AG04450 (cell line): ENCODE measurements at regions of chr11 and their contacts with region 1.

Region 1: DNA sequence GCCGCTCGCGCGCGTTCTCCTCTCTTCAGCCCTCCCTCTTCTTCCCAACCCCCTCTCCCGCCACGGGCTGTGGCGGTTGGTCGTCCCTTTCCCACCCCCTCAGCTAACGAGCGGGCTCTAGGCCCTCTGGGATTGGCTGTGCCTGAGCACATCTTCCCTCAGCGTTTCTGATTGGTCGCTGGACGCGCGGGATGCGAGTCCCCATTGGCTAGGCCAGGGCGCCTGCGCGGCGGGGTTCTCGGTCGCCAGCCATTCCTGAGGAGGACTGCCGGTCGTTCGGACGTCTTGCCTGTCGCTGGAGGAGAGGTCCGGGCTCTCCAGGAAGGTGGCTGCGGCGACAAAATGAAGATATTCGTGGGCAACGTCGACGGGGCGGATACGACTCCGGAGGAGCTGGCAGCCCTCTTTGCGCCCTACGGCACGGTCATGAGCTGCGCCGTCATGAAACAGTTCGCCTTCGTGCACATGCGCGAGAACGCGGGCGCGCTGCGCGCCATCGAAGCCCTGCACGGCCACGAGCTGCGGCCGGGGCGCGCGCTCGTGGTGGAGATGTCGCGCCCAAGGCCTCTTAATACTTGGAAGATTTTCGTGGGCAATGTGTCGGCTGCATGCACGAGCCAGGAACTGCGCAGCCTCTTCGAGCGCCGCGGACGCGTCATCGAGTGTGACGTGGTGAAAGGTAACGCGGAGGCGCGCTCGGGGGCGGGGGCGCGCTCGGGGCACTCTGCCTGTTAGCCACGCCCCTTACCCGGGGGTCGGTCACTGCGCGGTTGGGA is at the start of gene RBM14:
- DNase-seq: peak; percentile 96
- H3K4me3 ChIP-seq: peak within 1 kb of the TSS; percentile 95
- H3K27ac ChIP-seq: peak within 1 kb of the TSS; percentile 93
- H3K27me3 ChIP-seq: no peaks in the 10 kb centered on the region
- CTCF ChIP-seq: no peak
- polyA plus RNA-seq, gene RBM14: 21.4 and 25.0 TPM in 2 replicates

Region 2: GRCh38 chr11:66443602-66444001 is 173.0 kb before region 1 on chr11:
- CTCF ChIA-PET with region 1: no interaction called
- POLR2A ChIA-PET with region 1: no interaction called
- DNase-seq: peak; percentile 58
- H3K4me3 ChIP-seq: no peak overlapping the region
- H3K27ac ChIP-seq: peak overlapping the region; percentile 61
- H3K27me3 ChIP-seq: peaks cover 10% of the 10 kb centered on the region
- CTCF ChIP-seq: no peak

Region 3: DNA sequence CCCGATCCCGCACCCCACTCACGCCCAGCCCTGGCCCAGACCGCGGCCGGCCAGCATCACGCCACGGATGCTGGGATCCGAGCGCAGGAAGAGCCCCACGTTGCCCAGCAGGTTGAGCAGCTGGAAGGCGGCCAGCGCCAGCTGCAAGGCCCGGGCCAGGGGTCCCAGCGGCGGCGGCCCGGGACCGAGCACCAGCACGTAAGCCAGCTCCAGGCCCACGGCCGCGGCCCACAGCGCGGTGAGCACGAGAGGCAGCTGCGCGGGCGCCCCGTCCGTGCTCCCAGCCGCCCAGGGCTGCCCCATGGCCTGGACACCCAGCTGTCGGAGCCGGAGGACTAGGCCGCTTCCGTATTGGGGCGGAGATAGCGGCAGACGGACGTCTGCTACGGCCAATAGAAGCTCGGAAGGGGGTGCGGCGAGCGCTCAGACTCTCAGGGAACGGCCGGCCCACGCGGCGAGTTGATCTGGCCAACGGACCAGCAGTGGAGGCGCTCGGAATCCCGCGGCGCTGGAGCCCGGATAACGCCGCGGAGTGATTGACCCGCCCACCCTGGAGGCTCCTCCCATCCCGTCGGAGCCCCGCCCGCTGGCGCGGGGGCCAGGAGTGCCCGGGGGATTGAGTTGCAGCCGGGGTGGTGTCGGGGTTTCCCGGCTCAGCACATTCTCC is 70.7 kb before region 1 on chr11 and contains the start of gene ZDHHC24:
- CTCF ChIA-PET with region 1: no interaction called
- POLR2A ChIA-PET with region 1: interaction called, 14 read pairs
- DNase-seq: peak; percentile 94
- H3K4me3 ChIP-seq: peak within 1 kb of the TSS; percentile 70
- H3K27ac ChIP-seq: no peak within 1 kb of the TSS
- H3K27me3 ChIP-seq: peaks cover 10% of the 10 kb centered on the region
- CTCF ChIP-seq: no peak
- polyA plus RNA-seq, gene ZDHHC24: 6.2 and 6.8 TPM in 2 replicates

Region 4: DNA sequence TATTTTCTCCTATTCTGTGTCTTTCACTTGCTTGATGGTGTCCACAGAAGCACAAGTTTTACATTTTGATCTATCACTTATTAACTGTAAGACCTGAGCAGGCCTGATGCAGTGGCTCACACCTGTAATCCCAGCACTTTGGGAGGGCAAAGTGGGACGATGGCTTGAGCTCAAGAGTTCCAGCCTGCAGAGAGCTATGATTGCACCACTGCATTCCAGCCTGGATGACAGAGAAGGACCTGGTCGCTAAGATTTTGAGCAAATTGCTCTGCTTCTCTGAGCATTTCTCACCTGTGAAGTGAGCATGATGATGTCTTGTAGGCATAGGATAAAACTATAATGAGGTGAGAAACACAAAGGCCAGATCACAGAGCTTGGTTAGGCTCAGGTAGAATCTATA is 30.4 kb before region 1 on chr11:
- CTCF ChIA-PET with region 1: no interaction called
- POLR2A ChIA-PET with region 1: no interaction called
- DNase-seq: no peak
- H3K4me3 ChIP-seq: no peak overlapping the region
- H3K27ac ChIP-seq: no peak overlapping the region
- H3K27me3 ChIP-seq: peaks cover 4% of the 10 kb centered on the region
- CTCF ChIP-seq: no peak

Region 5: GRCh38 chr11:66784575-66784974 is 168.0 kb after region 1 on chr11:
- CTCF ChIA-PET with region 1: no interaction called
- POLR2A ChIA-PET with region 1: no interaction called
- DNase-seq: no peak
- H3K4me3 ChIP-seq: no peak overlapping the region
- H3K27ac ChIP-seq: no peak overlapping the region
- H3K27me3 ChIP-seq: no peaks in the 10 kb centered on the region
- CTCF ChIP-seq: no peak

Region 6: DNA sequence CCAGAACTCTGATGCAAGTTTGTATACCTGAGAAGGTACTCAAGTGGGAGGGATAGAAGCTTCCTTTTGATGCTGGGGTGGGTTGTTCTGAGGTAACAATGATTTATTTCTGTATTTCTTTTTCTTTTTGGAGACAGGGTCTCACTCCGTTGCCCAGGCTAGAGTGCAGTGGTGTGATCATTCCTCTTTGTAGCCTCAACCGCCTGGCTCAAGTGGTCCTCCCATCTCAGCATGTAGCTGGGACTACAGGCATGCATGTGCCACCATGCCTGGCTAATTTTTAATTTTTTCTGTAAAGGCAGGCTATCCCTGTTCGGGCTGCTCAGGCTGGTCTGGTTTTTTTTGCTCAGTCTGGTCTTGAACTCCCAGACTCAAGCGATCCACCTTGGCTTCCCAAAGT is 510.4 kb after region 1 on chr11:
- CTCF ChIA-PET with region 1: no interaction called
- POLR2A ChIA-PET with region 1: no interaction called
- DNase-seq: no peak
- H3K4me3 ChIP-seq: no peak overlapping the region
- H3K27ac ChIP-seq: peak overlapping the region; percentile 39
- H3K27me3 ChIP-seq: no peaks in the 10 kb centered on the region
- CTCF ChIP-seq: no peak